ENCODE measurements at regions of chr1 and their contacts with region 1.

Region 1: DNA sequence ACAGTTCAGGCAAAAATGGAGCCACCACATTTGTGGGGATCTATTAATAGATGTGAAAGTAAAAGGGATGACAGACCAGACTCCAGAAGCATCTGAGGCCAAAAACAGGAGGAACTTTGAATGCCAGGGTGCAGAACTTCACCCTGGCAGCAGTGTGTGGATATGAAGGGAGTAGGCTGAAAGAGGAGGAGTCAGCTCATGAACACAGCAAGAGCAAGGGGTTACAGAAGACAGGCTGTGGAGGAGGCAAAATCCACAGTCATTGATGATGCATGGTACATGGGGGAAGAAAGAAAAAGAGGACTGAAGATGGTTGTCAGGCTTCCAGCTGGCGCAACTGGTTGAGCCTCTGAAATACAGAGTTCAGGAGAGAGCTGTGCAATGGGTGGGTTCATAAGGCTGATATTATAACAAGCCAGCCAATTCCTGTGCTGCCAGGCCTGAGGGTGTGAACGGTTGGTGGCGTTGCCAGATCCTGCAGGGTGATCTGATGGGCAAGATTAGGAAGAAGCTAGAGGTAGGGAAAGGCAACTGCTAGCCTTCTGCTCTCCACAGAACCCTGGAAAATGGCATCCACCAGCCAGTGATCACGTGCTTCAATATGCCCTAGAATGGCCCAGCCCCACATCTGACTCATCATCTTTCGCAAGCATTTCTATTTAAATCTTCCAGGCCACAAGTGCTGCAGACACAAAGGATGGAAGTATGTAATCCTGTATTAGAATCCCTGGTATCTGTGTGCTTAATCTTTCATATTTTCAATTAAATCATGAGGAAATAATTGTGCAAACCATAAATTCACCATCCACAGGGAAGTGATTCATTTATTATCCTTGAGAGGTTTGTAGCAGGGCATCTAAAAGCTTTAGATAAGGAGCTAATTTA is 81.9 kb downstream of the SLC25A24 start:
- DNase-seq: no peak
- H3K4me3 ChIP-seq: no peak overlapping the region
- H3K27ac ChIP-seq: no peak overlapping the region
- H3K4me1 ChIP-seq: no peaks in the 10 kb centered on the region
- H3K27me3 ChIP-seq: peaks cover 5% of the 10 kb centered on the region
- CTCF ChIP-seq: no peak
- EP300 ChIP-seq: no peak
- POLR2A ChIP-seq: no peak

Region 2: GRCh38 chr1:107793896-107794453 is 324.3 kb before region 1 on chr1:
- in situ Hi-C with region 1: loop called in 1 of 4 experiments (anchors 5 kb)
- intact Hi-C with region 1: no loop called
- DNase-seq: no peak
- H3K4me3 ChIP-seq: no peak overlapping the region
- H3K27ac ChIP-seq: no peak overlapping the region
- H3K4me1 ChIP-seq: no peaks in the 10 kb centered on the region
- H3K27me3 ChIP-seq: no peaks in the 10 kb centered on the region
- CTCF ChIP-seq: no peak
- EP300 ChIP-seq: no peak
- POLR2A ChIP-seq: no peak

Measured in transverse colon (tissue), 4 donors.